ENCODE measurements at regions of chr14 and their contacts with region 1.

Region 1: GRCh38 chr14:91249841-91250616 is 5.5 kb upstream of the GPR68 start:
- DNase-seq: peak; percentile 90
- ATAC-seq: peak; percentile 89
- H3K4me3 ChIP-seq: peak overlapping the region; percentile 13; the same call in 1 of the 2 replicates
- H3K27ac ChIP-seq: peak overlapping the region; percentile 67
- H3K4me1 ChIP-seq: peaks cover 39% of the 10 kb centered on the region
- H3K27me3 ChIP-seq: no peaks in the 10 kb centered on the region
- CTCF ChIP-seq: 0 out of 6 replicates have a peak, but pooled peaks of 1 of the 3 experiments have one; percentile 1
- EP300 ChIP-seq: peak; percentile 66 to 69; a peak in 2 of 4 replicates
- POLR2A ChIP-seq: no peak
- RAD21 ChIP-seq: no peak

Region 2: GRCh38 chr14:91228112-91229004 is 21.7 kb before region 1 on chr14:
- CTCF ChIA-PET with region 1: interaction called, 59 read pairs
- POLR2A ChIA-PET with region 1: interaction called, 108 read pairs
- RAD21 ChIA-PET with region 1: interaction called, 90 read pairs
- SMC1A ChIA-PET with region 1: interaction called, 142 read pairs
- in situ Hi-C with region 1: no loop called
- intact Hi-C with region 1: loop called (anchors 1 kb)
- DNase-seq: peak; percentile 86
- ATAC-seq: peak; percentile 89
- H3K4me3 ChIP-seq: 0 out of 2 replicates have a peak overlapping the region, but pooled peaks have one; percentile 4
- H3K27ac ChIP-seq: peak overlapping the region; percentile 92
- H3K4me1 ChIP-seq: peaks cover 53% of the 10 kb centered on the region
- H3K27me3 ChIP-seq: no peaks in the 10 kb centered on the region
- CTCF ChIP-seq: no peak
- EP300 ChIP-seq: peak; percentile 37 to 78; a peak in 2 of 4 replicates
- POLR2A ChIP-seq: peak; percentile 63
- RAD21 ChIP-seq: no peak

Region 3: DNA sequence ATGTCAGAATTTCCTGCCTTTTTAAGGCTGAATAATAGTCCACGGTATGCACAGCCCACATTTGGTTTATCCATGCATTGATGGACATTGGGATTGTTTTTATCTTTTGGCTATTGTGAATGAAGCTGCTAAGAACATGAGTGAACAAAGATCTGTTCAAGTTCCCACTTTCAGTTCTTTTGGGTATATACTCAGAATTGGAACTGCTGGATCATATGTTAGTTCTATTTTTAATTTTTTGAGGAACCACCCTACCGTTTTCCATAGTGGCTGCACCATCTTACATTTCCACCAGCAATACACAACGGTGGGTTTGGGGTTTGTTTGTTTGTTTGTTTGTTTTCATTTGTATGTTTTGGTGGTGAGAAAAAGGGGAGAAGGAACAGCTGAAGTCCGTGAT is 11.9 kb before region 1 on chr14:
- CTCF ChIA-PET with region 1: interaction called, 19 read pairs
- POLR2A ChIA-PET with region 1: interaction called, 5 read pairs
- RAD21 ChIA-PET with region 1: interaction called, 31 read pairs
- SMC1A ChIA-PET with region 1: interaction called, 29 read pairs
- in situ Hi-C with region 1: no loop called
- intact Hi-C with region 1: no loop called
- DNase-seq: no peak
- ATAC-seq: no peak
- H3K4me3 ChIP-seq: no peak overlapping the region
- H3K27ac ChIP-seq: no peak overlapping the region
- H3K4me1 ChIP-seq: peaks cover 21% of the 10 kb centered on the region
- H3K27me3 ChIP-seq: no peaks in the 10 kb centered on the region
- CTCF ChIP-seq: no peak
- EP300 ChIP-seq: no peak
- POLR2A ChIP-seq: no peak
- RAD21 ChIP-seq: no peak

Measured in GM12878 (cell line).